ENCODE measurements at regions of chr11 and their contacts with region 1.

Region 1: GRCh38 chr11:44379141-44380008 is 69.4 kb upstream of the ALX4 start:
- DNase-seq: no peak
- H3K4me3 ChIP-seq: no peak overlapping the region
- H3K27ac ChIP-seq: no peak overlapping the region
- H3K4me1 ChIP-seq: peaks cover 16% of the 10 kb centered on the region
- H3K27me3 ChIP-seq: no peaks in the 10 kb centered on the region
- CTCF ChIP-seq: no peak

Region 2: GRCh38 chr11:44464741-44465140 is 85.4 kb after region 1 on chr11:
- CTCF ChIA-PET with region 1: no interaction called
- POLR2A ChIA-PET with region 1: no interaction called
- intact Hi-C with region 1: no loop called
- DNase-seq: no peak
- H3K4me3 ChIP-seq: no peak overlapping the region
- H3K27ac ChIP-seq: no peak overlapping the region
- H3K4me1 ChIP-seq: no peaks in the 10 kb centered on the region
- H3K27me3 ChIP-seq: no peaks in the 10 kb centered on the region
- CTCF ChIP-seq: peak; percentile 32; the same call in 1 of the 2 replicates

Region 3: DNA sequence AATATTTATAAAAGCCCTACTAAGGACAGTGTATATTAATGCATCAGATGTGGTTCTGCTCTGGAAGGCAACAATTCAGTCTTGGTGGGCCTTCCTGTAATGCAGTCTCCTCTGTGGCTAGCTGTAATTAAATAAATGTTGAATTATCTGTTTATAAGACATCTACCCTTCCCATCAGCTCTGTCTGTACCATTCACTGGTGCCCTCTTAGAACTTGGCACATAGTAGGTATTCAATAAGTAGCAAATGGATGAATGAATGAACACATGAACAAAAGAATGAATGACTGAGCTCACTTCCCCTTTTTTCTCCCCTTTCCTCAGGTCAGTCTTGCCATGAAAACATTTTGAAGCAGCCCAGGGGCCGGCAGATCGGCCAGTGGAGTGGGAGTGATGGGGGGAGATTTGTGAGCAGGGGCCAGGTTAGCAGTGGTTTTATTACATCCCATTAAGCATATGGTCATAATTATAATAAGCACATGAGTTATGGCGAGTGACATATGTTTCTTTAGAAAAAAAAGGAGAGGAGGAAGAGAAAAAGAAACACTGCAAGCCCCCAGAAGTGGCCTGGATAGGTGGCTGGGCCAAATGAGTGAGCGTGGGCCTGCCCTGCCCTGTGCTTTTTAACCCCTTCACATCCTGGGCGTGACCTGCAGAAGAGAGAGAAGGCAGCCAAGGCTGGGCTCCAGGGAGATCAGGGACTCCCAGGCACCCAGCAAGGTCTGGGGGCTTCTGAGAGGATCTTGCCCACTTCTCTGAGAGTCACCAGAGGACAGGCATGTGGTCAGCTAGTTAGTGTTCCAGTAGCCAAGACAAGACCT is 137.5 kb after region 1 on chr11:
- CTCF ChIA-PET with region 1: no interaction called
- POLR2A ChIA-PET with region 1: interaction called, 27 read pairs
- intact Hi-C with region 1: no loop called
- DNase-seq: no peak
- H3K4me3 ChIP-seq: no peak overlapping the region
- H3K27ac ChIP-seq: no peak overlapping the region
- H3K4me1 ChIP-seq: no peaks in the 10 kb centered on the region
- H3K27me3 ChIP-seq: no peaks in the 10 kb centered on the region
- CTCF ChIP-seq: no peak

Region 4: GRCh38 chr11:45102810-45103621 is 723.6 kb after region 1 on chr11:
- CTCF ChIA-PET with region 1: no interaction called
- POLR2A ChIA-PET with region 1: no interaction called
- intact Hi-C with region 1: no loop called
- DNase-seq: peak; percentile 85
- H3K4me3 ChIP-seq: no peak overlapping the region
- H3K27ac ChIP-seq: no peak overlapping the region
- H3K4me1 ChIP-seq: no peaks in the 10 kb centered on the region
- H3K27me3 ChIP-seq: peaks cover 26% of the 10 kb centered on the region
- CTCF ChIP-seq: peak; percentile 100

Measured in A673 (cell line).